ENCODE measurements at regions of chr7 and their contacts with region 1.

Region 1: DNA sequence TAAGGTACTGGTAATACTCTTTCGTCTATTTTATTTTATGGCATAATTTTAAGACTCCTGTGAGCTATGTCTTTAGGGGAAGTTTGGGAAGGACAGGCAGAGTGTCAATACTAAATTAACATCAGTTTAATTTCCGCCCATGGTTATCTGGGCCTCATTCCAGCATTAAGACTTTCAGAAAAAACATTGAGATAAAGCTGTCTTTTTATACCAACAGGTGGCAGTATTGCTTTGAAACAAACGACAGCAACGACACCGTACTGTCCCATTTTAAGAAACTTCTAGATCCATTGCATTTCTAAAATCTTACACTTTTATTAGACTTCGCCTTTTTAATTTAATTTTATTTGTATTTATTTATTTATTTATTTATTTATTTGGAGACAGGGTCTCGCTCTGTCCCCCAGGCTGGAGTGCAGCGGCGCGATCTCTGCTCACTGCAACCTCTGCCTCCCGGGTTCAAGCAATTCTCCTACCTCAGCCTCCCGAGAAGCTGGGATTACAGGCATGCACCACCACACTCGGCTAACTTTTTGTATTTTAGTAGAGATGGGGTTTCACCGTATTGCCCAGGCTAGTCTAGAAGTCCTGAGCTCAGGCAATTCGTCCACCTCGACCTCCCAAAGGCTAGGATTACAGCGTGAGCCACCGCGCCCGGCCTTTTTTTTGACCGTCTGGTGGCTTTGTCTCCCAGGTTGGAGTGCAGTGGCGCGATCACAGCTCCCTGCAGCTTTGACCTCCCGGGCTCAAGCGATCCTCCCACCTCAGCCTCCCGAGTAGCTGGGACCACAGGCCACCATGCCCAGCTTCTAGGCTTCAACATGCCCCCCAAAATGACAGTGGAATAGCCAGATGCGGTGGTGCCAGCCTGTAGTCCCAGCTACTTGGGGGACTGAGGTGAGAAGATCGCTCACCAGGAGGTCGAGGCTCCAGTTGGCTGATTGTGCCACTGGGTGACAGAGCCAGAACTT is 78.7 kb upstream of the C1GALT1 start:
- DNase-seq: peak in 1 of 2 experiments; percentile 43
- H3K4me3 ChIP-seq: no peak overlapping the region
- H3K27ac ChIP-seq: no peak overlapping the region
- H3K4me1 ChIP-seq: peaks cover 14% of the 10 kb centered on the region
- H3K27me3 ChIP-seq: no peaks in the 10 kb centered on the region
- CTCF ChIP-seq: peak; percentile 80

Region 2: DNA sequence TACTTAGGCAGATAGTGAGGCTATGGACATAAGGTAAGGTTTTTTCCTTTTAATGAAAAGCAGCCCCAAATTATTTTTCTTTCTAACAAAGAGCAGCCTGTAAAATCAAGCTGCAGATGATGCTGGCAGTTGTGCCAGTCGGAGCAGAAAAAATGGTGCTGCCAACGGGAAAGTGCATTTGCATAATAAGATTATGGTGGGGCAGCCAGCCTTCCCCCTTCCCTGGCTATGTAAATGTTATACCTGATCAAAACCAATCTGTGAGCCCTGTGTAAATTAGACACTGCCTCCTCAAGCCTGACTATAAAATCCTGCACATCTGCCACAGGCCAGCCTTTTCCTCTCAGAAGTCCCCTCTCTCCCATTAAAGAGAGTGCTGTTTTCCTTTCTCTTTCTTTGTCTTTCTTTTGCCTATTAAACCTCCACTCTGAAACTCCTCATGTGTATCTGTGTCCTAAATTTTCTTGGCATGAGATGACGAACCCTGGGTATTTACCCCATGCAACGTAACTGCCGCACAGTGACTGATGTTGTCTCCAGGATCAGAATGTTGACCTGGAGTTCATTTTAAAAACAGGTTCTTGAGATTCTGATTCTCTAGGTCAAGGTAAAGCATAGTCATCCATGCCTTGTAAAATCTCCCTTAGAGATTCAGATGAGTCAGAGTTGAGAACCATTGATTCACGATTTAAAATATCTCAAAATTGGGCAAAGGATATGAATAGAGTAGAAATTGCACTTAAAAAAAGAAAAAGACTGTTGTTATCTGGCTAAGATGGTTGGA is 88.6 kb before region 1 on chr7:
- CTCF ChIA-PET with region 1: no interaction called
- POLR2A ChIA-PET with region 1: no interaction called
- intact Hi-C with region 1: loop called (anchors 5 kb)
- DNase-seq: peak in 1 of 2 experiments; percentile 79
- H3K4me3 ChIP-seq: no peak overlapping the region
- H3K27ac ChIP-seq: no peak overlapping the region
- H3K4me1 ChIP-seq: peaks cover 21% of the 10 kb centered on the region
- H3K27me3 ChIP-seq: 0 out of 2 replicates have a peak, but pooled peaks cover 5% of the 10 kb centered on the region
- CTCF ChIP-seq: no peak

Region 3: DNA sequence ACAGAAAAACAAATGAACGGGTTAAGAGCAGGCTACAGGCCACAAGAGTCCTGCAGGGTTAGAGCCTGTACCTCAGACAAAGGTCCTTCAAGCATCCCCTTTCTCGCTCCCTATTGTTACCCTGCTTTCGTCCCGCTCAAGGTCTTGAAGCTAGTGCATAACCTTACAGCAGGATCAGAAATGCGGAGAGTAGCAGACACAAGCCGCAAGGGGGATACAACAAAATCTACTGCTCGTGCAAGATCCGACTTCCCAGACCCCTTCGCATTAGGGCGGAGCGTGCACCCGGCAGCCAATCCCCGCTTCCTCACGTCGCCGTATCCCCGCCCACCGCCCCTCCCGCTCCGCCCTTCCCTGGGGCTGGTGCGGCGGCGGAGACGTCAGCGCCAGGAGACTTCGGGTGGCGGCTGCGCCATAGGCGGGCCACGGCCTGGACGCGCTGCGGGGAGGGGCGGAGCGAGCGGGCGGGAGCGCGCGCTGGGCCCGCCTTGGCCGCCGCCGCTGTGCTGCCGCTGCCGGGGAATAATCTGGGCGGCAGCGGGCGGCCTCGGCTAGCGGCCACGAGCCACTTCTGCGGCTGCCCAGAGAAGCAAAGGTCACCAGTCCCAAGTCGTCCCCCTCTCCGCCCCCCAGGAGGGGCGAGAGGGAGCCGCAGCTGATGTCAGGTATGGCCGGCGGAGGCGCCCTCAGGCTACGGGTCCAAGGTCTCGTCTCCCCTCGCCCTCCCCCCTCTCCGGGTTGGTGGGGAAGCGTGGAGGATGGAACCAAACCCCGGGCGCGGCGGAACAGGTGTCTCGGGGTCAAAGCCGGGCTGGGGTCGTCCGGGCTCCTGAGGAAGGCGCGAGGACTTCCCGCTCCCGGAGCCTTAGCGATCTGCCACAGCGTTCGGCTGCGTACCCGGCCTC is 78.8 kb after region 1 on chr7 and contains the start of gene C1GALT1:
- CTCF ChIA-PET with region 1: interaction called, 3 read pairs
- POLR2A ChIA-PET with region 1: no interaction called
- intact Hi-C with region 1: loop called (anchors 1 kb)
- DNase-seq: peak; percentile 95 to 99
- H3K4me3 ChIP-seq: peak within 1 kb of the TSS; percentile 67
- H3K27ac ChIP-seq: peak within 1 kb of the TSS; percentile 88
- H3K4me1 ChIP-seq: peaks cover 42% of the 10 kb centered on the region
- H3K27me3 ChIP-seq: no peaks in the 10 kb centered on the region
- CTCF ChIP-seq: peak; percentile 43; the same call in 1 of the 2 replicates
- total RNA-seq, gene C1GALT1: 44.7 and 54.2 TPM in 2 replicates

Region 4: GRCh38 chr7:7321720-7322128 is 218.1 kb after region 1 on chr7:
- CTCF ChIA-PET with region 1: no interaction called
- POLR2A ChIA-PET with region 1: no interaction called
- intact Hi-C with region 1: loop called (anchors 5 kb)
- DNase-seq: peak; percentile 57 to 72
- H3K4me3 ChIP-seq: no peak overlapping the region
- H3K27ac ChIP-seq: no peak overlapping the region
- H3K4me1 ChIP-seq: peaks cover 24% of the 10 kb centered on the region
- H3K27me3 ChIP-seq: no peaks in the 10 kb centered on the region
- CTCF ChIP-seq: no peak

Region 5: GRCh38 chr7:7416031-7416858 is 312.6 kb after region 1 on chr7:
- CTCF ChIA-PET with region 1: interaction called, 7 read pairs
- POLR2A ChIA-PET with region 1: no interaction called
- intact Hi-C with region 1: loop called (anchors 1 kb)
- DNase-seq: peak; percentile 87 to 100
- H3K4me3 ChIP-seq: no peak overlapping the region
- H3K27ac ChIP-seq: peak overlapping the region; percentile 84
- H3K4me1 ChIP-seq: peaks cover 36% of the 10 kb centered on the region
- H3K27me3 ChIP-seq: no peaks in the 10 kb centered on the region
- CTCF ChIP-seq: no peak

Region 6: DNA sequence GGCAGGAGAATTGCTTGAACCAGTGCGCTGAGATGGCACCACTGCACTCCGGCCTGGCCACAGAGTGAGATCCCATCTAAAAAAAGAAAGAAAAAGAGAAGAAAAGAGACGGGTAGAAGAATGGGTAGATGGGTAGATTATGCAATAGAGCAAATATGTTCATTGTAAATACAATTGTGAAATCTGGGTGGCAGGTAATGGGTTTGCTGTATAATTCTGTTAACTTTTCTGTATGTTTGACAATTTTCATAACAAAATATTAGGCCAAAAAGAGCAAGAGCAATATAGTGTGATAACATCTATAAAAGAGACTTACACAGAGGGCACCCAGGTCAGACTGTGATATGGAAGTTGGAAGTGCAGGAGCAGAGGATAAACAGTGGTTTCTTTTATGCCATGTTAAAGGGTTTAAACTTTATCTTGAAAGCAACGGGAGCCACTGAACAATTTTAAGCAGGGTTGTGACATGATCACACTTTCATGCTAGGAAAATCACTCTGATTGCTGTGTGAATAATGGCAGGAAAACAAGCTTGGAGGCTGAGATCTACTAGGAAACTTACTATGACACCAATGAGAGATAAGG is 438.7 kb after region 1 on chr7:
- CTCF ChIA-PET with region 1: no interaction called
- POLR2A ChIA-PET with region 1: no interaction called
- intact Hi-C with region 1: loop called (anchors 2 kb)
- DNase-seq: no peak
- H3K4me3 ChIP-seq: no peak overlapping the region
- H3K27ac ChIP-seq: no peak overlapping the region
- H3K4me1 ChIP-seq: peaks cover 15% of the 10 kb centered on the region
- H3K27me3 ChIP-seq: no peaks in the 10 kb centered on the region
- CTCF ChIP-seq: no peak

Region 7: DNA sequence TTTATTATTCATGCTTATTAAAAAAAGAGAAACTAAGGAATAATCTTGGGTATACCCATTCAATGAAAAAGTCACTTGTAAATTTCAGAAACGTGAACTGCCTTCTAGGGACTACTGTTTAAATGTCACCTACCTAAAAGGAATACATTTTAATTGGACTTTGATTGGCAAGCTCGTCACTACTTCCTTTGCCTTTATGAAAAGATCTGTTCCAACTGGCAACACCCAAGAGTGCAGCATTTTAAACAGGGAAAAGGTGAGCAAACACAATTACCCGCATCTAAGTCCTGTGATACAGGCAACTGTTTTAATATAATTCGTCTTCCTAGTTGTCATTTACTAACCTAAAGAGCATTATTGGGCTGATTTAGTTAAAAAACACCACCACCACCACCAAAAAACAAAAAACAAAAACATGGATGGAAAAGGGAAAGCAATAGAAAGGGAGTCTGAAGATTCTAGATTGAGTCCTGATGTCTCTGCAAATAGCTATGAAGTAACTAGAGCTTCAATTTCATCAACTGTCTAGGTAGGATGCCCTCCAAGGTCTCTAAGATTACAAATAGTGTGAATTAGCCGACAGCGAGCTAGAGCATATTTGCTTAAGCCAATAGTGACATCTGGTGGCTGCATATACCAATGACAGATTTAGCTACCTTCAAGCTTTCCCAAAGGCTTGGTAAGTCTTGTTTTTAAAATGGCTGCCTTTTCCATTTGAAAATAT is 1192.2 kb after region 1 on chr7:
- CTCF ChIA-PET with region 1: no interaction called
- POLR2A ChIA-PET with region 1: no interaction called
- intact Hi-C with region 1: loop called (anchors 10 kb)
- DNase-seq: peak; percentile 46 to 82
- H3K4me3 ChIP-seq: no peak overlapping the region
- H3K27ac ChIP-seq: no peak overlapping the region
- H3K4me1 ChIP-seq: peaks cover 11% of the 10 kb centered on the region
- H3K27me3 ChIP-seq: no peaks in the 10 kb centered on the region
- CTCF ChIP-seq: peak; percentile 93

Measured in PC-9 (cell line).